ENCODE measurements at regions of chr12 and their contacts with region 1.

Region 1: GRCh38 chr12:27243804-27244683 is at the start of gene STK38L:
- DNase-seq: peak; percentile 95
- H3K4me3 Mint-ChIP-seq: peak within 1 kb of the TSS; percentile 99
- H3K27ac Mint-ChIP-seq: peak within 1 kb of the TSS; percentile 98
- H3K4me1 Mint-ChIP-seq: peaks cover 19% of the 10 kb centered on the region
- H3K27me3 Mint-ChIP-seq: no peaks in the 10 kb centered on the region
- CTCF ChIP-seq: peak; percentile 22
- total RNA-seq, gene STK38L: 18.1 and 19.9 TPM in 2 replicates

Region 2: DNA sequence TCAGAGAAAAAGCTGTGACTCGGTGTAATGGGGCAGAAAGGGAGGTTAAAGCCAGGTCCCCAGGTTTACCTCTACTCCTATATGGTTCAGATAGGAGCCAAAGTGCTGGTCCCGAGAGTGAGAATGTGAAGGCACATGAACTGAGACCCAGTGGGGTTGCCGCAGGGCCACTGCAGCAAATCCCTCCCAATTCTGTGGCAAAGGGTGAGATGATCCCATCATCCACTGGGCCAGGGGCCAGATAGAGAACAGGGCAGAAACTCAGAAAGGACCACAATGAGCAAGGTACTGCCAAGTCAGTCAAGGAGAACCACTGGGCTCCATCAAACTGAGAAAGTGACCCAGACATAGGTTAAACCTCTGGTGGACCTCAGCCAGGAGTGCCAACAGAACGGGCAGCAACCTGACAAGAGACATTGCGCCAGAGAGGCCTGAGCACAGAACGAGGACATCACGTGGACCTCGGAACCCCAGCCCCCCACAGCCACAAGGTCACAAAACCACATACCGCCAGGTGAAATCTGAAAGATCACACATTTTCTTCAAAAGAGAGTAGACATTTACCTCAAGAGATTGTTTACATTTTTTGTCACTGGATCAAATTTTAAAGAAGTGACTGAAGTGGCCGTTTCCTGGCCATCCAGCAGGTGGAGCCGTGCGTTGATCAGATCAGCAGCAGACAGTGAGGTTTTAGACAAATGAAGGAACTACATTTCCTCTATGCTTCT is 390.6 kb before region 1 on chr12:
- CTCF ChIA-PET with region 1: no interaction called
- POLR2A ChIA-PET with region 1: no interaction called
- intact Hi-C with region 1: loop called (anchors 2 kb)
- DNase-seq: peak; percentile 64
- H3K4me3 Mint-ChIP-seq: no peak overlapping the region
- H3K27ac Mint-ChIP-seq: no peak overlapping the region
- H3K4me1 Mint-ChIP-seq: peaks cover 9% of the 10 kb centered on the region
- H3K27me3 Mint-ChIP-seq: no peaks in the 10 kb centered on the region
- CTCF ChIP-seq: peak; percentile 76

Region 3: DNA sequence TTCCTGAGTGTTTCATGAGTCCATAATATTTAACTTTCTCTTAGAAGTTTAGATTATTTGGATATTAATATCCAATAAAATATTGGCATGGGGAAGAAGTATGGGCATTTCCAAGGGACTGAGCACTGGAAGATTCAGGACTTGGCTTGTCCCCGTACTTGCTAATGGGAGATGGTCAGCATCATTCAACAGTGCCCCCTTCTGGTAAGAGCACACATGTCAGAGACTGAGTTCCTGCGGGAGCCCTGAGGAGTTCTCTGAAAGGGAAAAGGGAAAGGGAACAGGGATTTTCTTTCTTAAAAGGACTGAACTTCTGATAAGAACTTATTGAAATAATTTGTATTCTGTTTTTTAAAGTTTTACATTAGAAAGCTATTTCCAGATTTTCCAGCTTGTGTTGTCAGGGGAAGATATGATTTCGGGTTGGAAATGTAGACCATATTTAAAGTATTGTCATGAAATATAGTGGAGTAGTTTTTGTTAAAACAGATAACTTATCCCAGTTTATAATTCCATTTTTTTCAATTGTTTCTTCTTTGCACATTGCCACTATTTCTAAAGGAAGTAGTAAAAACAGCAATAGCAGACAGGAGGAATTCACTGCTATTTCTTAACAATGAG is 101.8 kb before region 1 on chr12:
- CTCF ChIA-PET with region 1: no interaction called
- POLR2A ChIA-PET with region 1: no interaction called
- intact Hi-C with region 1: loop called (anchors 1 kb)
- DNase-seq: peak; percentile 84
- H3K4me3 Mint-ChIP-seq: no peak overlapping the region
- H3K27ac Mint-ChIP-seq: peak overlapping the region; percentile 41
- H3K4me1 Mint-ChIP-seq: no peaks in the 10 kb centered on the region
- H3K27me3 Mint-ChIP-seq: no peaks in the 10 kb centered on the region
- CTCF ChIP-seq: peak; percentile 73

Region 4: GRCh38 chr12:27226407-27226929 is 17.6 kb before region 1 on chr12:
- CTCF ChIA-PET with region 1: interaction called, 6 read pairs
- POLR2A ChIA-PET with region 1: interaction called, 12 read pairs
- intact Hi-C with region 1: no loop called
- DNase-seq: peak; percentile 65
- H3K4me3 Mint-ChIP-seq: no peak overlapping the region
- H3K27ac Mint-ChIP-seq: peak overlapping the region; percentile 89
- H3K4me1 Mint-ChIP-seq: peaks cover 12% of the 10 kb centered on the region
- H3K27me3 Mint-ChIP-seq: no peaks in the 10 kb centered on the region
- CTCF ChIP-seq: no peak

Region 5: DNA sequence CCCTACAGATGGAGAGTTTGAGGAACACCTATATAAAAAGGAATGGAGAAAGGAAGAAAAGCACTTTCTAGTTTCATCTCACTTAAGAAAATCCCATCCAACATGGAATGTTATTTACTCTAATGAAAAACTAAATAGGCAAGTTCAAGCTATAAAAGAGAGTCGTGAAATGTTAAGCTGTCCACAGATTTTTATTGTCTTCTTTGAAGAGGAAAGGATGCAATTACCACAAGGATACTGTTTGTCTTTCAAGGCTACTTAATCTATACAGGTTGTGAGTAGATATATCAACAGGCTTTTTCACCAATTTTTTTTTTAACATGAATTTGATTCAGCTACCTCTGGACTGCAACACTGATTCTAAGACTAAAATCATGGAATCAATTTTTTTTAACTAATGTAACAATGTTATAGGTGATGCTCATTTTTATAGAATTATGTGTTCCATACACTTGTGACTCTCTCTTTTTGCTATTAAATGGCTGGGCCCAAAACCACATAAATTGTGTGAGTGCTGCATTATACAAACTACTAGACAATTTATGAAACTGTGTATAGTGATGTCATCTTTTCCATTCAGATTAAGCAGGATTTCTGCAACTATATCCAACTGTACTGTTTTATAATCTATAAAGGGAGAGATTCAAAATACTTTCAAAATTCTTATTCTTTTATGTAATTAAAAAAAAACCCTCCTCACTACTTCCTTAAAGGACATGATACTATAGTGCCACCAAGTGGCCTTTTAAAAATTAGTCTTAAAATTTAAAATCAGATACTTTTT is 61.8 kb after region 1 on chr12:
- CTCF ChIA-PET with region 1: interaction called, 7 read pairs
- POLR2A ChIA-PET with region 1: interaction called, 7 read pairs
- intact Hi-C with region 1: loop called (anchors 5 kb)
- DNase-seq: peak; percentile 44
- H3K4me3 Mint-ChIP-seq: no peak overlapping the region
- H3K27ac Mint-ChIP-seq: no peak overlapping the region
- H3K4me1 Mint-ChIP-seq: peaks cover 10% of the 10 kb centered on the region
- H3K27me3 Mint-ChIP-seq: no peaks in the 10 kb centered on the region
- CTCF ChIP-seq: peak; percentile 50

Region 6: DNA sequence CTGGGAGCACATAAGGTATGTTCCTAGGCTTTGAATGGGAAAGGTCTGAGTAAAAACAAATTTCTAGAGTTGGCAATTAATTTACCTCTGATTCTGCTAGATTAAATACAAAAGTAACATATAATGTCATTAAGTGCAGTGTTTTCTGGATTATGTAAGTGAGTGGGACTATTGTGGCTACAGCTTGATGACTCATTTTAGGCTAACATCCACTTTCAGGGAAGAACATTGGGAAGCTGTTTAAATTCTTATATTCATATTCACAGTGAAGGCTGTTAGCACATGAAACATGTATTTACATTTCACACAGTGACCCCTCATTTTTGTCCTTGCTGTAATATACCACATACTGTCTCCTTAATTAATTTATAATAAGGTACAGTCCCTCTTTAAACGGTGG is 75.4 kb after region 1 on chr12:
- CTCF ChIA-PET with region 1: no interaction called
- POLR2A ChIA-PET with region 1: no interaction called
- intact Hi-C with region 1: no loop called
- DNase-seq: peak; percentile 52
- H3K4me3 Mint-ChIP-seq: no peak overlapping the region
- H3K27ac Mint-ChIP-seq: no peak overlapping the region
- H3K4me1 Mint-ChIP-seq: no peaks in the 10 kb centered on the region
- H3K27me3 Mint-ChIP-seq: no peaks in the 10 kb centered on the region
- CTCF ChIP-seq: no peak

Measured in MCF 10A (cell line).